ENCODE measurements at regions of chr19 and their contacts with region 1.

Region 1: DNA sequence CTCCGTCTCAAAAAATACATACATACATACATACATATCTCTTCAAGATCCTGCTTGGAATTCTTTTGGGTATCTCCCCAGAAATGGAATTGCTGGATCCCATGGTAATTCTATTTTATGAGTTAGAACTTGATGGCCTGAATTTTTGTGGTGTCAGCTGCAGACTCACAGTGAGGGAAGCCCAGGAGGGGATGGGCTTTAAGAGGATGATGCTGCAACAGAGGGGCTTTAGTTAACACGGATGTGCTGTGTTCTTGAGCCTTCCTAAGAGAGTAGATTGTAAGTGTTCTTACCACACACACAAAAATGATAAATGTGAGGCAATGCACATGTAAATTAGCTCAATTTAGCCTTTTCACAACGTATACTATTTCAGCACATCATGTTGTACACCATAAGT is 31.8 kb downstream of the CACNG6 start:
- DNase-seq: no peak
- H3K4me3 ChIP-seq: peak overlapping the region in 1 of 8 donors; percentile 31
- H3K27ac ChIP-seq: peak overlapping the region in 3 of 8 donors; percentile 67 to 79 (median 79)
- H3K4me1 ChIP-seq: peaks cover 0 to 37% (median 18%) of the 10 kb centered on the region in 6 donors
- H3K27me3 ChIP-seq: peaks cover 0 to 69% (median 11%) of the 10 kb centered on the region in 7 donors
- CTCF ChIP-seq: no peak
- POLR2A ChIP-seq: no peak

Region 2: GRCh38 chr19:53844849-53845246 is 178.3 kb before region 1 on chr19:
- intact Hi-C with region 1: loop called (anchors 5 kb)
- DNase-seq: peak; percentile 80
- H3K4me3 ChIP-seq: peak overlapping the region in 1 of 8 donors; percentile 18
- H3K27ac ChIP-seq: peak overlapping the region in 4 of 8 donors; percentile 26 to 74 (median 60)
- H3K4me1 ChIP-seq: peaks cover 7 to 61% (median 16%) of the 10 kb centered on the region in 6 donors
- H3K27me3 ChIP-seq: peaks cover 0 to 55% (median 0%) of the 10 kb centered on the region in 7 donors
- CTCF ChIP-seq: no peak
- POLR2A ChIP-seq: no peak

Measured in spleen (tissue), 13 donors.